Dendritic cell treated with granulocyte-macrophage colony-stimulating factor and Interleukin-4, amounts not matched to agents 40 ng/mL and 50 ng/mL, for 4 days (primary cell): ENCODE measurements at regions of chr19 and their contacts with region 1.

Region 1: DNA sequence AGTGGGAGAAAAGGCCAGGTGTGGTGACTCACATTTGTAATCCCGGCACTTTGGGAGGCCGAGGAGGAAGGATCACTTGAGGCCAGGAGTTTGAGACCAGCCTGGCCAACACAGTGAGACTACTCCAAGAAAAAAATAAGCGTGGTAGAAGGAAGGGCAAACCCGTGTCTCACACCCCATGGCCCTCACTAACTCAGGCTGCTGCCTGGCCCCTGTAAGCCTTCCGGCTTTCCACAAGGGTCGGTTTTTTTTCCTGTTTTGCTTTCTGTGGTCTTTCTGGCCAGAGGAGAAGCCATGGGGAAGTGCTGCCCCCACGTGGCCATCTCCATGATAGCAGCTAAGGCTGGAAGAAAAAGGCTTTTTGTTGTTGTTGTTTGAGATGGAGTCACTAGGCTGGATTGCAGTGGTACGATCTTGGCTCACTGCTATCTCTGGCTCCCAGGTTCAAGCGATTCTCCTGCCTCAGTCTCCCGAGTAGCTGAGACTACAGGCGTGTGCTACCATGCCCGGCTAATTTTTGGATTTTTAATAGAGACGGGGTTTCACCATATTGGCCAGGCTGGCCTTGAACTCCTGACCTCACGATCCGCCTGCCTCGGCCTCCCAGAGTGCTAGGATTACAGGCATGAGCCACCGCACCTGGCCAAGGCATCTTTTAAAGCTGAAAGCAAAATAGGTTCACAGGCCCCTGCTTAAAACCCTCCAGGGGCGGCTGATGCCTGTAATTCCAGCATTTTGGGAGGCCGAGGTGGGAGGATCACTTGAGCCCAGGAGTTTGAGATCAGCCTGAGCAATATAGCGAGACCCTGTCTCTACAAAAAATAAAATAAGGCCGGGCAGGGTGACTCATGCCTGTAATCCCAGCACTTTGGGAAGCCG is 7.5 kb upstream of the ARHGEF18 start:
- H3K4me3 Mint-ChIP-seq: no peak overlapping the region
- H3K27ac Mint-ChIP-seq: no peak overlapping the region
- H3K4me1 Mint-ChIP-seq: peaks cover 74% of the 10 kb centered on the region
- H3K27me3 Mint-ChIP-seq: peaks cover 17% of the 10 kb centered on the region

Region 2: DNA sequence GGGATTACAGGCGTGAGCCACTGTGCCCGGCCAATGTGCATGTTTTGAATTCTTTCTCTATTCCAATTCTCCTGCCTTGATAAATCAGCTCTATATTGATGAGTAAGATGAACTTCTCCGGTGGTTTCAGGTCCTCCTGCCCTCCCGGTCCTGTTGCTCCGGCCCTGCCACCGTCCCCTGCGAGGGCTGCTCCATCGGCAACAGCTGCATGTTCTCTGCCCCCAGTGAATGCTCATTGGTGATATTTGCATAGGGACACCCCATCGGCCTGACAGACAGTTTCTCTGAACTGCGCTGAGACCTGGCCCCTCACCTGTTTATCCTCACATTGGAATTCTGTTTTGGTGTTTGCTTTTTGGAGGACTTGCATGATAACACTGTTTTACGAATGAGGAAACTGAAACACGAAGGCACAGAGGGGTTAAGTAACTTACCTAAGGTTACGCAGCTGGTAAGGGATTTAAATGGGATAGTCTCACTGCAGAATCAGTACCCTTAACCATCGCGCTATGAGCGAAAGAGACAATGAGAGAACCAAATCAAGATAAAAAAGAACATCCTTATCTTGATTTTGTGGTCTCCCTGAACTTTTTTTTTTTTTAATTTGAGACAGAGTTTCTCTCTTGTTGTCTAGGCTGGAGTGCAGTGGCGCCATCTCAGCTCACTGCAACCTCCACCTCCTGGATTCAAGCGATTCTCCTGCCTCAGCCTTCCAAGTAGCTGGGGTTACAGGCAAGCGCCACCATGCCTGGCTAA is 239.5 kb before region 1 on chr19:
- intact Hi-C with region 1: loop called (anchors 1 kb)
- H3K4me3 Mint-ChIP-seq: no peak overlapping the region
- H3K27ac Mint-ChIP-seq: no peak overlapping the region
- H3K4me1 Mint-ChIP-seq: peaks cover 22% of the 10 kb centered on the region
- H3K27me3 Mint-ChIP-seq: peaks cover 7% of the 10 kb centered on the region

Region 3: DNA sequence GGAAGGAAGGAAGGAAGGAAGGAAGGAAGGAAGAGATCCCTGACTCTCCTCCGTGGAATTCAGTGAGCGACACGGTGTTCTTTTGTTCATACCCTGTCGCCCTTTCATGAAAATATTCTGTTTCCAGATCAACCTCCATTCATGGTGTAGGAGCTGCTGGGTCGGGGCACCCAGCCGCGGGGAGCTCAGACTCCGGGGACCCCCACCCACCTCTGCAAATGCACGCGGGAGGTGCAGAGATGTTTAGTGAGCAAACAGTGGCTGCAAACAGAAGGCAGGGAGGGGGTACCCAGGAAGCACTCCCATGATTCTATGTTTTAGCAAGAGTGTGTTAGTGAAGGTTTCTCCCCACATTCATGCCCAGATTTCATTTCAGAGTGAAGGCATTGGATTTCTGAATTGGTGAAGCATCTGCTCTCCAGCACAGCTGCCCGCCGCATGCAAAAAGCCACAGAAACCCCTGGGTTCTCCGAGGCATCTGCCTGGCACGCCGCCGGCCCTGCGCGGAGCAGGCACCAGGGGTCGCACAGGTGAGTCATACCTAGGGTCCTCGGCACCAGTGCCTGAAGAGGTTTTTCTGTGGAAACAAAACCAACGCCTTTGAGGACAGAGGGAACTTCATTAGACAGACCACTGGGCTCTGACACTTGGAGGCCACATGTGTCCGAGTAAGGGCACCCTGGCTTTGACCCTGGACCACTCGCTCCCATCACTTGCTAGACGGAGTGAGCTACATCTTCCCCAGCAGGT is 191.1 kb before region 1 on chr19:
- intact Hi-C with region 1: loop called (anchors 1 kb)
- H3K4me3 Mint-ChIP-seq: no peak overlapping the region
- H3K27ac Mint-ChIP-seq: no peak overlapping the region
- H3K4me1 Mint-ChIP-seq: peaks cover 9% of the 10 kb centered on the region
- H3K27me3 Mint-ChIP-seq: no peaks in the 10 kb centered on the region

Region 4: GRCh38 chr19:7355151-7355820 is 14.1 kb after region 1 on chr19:
- intact Hi-C with region 1: no loop called
- H3K4me3 Mint-ChIP-seq: no peak overlapping the region
- H3K27ac Mint-ChIP-seq: peak overlapping the region; percentile 43
- H3K4me1 Mint-ChIP-seq: peaks cover 40% of the 10 kb centered on the region
- H3K27me3 Mint-ChIP-seq: no peaks in the 10 kb centered on the region